Panc1 (cell line): ENCODE measurements at regions of chr4 and their contacts with region 1.

Region 1: DNA sequence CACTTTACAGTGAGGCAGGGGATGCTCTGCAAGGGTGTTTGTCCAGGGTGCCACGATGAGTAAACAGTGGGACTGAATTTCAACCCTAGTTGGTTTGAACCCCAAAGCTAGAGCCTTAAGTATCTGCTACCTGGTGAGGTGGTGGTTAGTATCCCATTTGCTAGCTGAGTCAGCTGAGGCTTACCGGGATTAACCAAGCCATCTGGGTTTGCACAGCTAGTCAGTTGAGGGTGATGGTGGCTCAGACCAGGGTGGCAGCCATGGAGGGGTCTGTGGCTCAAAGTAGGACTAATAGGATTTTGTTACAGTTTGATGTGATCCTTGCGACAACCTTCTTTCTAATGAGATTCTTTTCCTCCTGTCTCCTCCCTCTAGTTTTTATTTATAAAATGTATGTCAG is 1.9 kb downstream of the EVC start:
- DNase-seq: no peak
- ATAC-seq: no peak
- H3K4me3 ChIP-seq: no peak overlapping the region
- H3K27ac ChIP-seq: no peak overlapping the region
- H3K4me1 ChIP-seq: peaks cover 9% of the 10 kb centered on the region
- H3K27me3 ChIP-seq: no peaks in the 10 kb centered on the region
- CTCF ChIP-seq: no peak

Region 2: DNA sequence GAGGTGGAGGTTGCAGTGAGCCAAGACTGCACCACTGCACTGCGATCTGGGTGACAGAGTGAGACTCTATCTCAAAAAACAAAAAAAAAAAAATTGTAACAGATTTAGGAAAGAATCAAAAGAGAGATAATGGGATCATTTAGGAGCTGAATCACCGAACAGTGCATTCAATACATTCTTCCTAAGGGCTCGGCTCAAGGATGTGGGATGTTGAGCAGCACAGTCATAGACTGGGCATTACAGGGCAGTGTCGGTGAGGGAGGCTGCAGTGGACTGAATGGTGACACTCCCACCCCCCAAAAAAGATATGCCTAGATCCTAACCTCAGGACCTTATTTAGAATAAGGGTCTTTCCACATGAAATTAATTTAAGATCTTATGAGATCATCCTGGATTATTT is 74.6 kb before region 1 on chr4:
- CTCF ChIA-PET with region 1: interaction called, 11 read pairs
- POLR2A ChIA-PET with region 1: no interaction called
- in situ Hi-C with region 1: no loop called
- intact Hi-C with region 1: no loop called
- DNase-seq: no peak
- ATAC-seq: no peak
- H3K4me3 ChIP-seq: no peak overlapping the region
- H3K27ac ChIP-seq: no peak overlapping the region
- H3K4me1 ChIP-seq: no peaks in the 10 kb centered on the region
- H3K27me3 ChIP-seq: no peaks in the 10 kb centered on the region; the same call in 1 of the 2 replicates
- CTCF ChIP-seq: no peak